Endothelial cell of umbilical vein (primary cell): ENCODE measurements at regions of chr21 and their contacts with region 1.

Region 1: DNA sequence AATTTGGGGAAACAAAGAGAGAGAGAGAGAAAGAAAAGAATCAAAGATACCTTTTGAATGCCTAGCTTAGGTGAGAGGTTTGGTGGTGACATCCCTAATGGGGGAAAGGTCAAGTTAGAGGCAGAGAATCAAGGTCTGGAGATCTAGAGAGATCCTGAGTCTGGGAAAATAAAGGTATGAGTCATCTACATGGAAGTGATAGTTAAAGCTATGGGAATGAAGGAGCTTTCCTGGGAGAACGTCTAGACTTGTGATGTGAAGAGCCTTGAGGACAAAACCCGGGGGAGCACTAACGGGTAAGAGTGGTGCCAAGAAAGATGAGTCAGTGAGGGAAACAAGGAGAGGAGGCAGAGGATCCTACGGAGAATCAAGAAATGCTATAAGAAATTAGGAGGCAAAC is 110.8 kb upstream of the RUNX1 start:
- DNase-seq: no peak
- H3K4me3 ChIP-seq: no peak overlapping the region
- H3K27ac ChIP-seq: no peak overlapping the region
- H3K4me1 ChIP-seq: no peaks in the 10 kb centered on the region
- H3K27me3 ChIP-seq: peaks cover 0 to 1% of the 10 kb centered on the region in 2 experiments
- CTCF ChIP-seq: no peak
- POLR2A ChIP-seq: no peak

Region 2: DNA sequence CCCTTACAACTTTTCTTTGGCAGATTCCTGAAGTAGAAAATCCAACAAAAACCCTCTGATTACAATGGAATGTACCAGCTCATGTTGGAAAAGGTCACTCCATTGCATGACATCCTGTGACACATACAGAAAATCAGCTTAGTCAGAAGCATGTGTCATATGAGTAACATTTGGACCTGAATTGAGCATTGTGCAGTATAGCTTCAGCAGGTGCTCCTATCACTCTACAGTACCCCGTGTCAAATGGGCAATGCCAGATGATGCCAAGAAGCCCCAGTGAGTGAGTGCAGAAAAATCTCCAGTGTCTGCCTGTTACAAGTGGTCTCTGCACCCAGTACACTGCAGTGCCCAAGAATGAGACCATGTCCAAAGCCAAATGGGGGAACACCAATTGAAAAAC is 18.9 kb after region 1 on chr21:
- CTCF ChIA-PET with region 1: no interaction called
- POLR2A ChIA-PET with region 1: no interaction called
- dilution Hi-C with region 1: no loop called
- intact Hi-C with region 1: no loop called
- DNase-seq: peak; percentile 10
- H3K4me3 ChIP-seq: no peak overlapping the region
- H3K27ac ChIP-seq: no peak overlapping the region
- H3K4me1 ChIP-seq: no peaks in the 10 kb centered on the region
- H3K27me3 ChIP-seq: peaks cover 0 to 2% of the 10 kb centered on the region in 2 experiments
- CTCF ChIP-seq: no peak
- POLR2A ChIP-seq: no peak

Region 3: GRCh38 chr21:35189077-35189863 is 29.4 kb after region 1 on chr21:
- CTCF ChIA-PET with region 1: no interaction called
- POLR2A ChIA-PET with region 1: no interaction called
- dilution Hi-C with region 1: no loop called
- intact Hi-C with region 1: loop called (anchors 1 kb)
- DNase-seq: no peak
- H3K4me3 ChIP-seq: no peak overlapping the region
- H3K27ac ChIP-seq: no peak overlapping the region
- H3K4me1 ChIP-seq: no peaks in the 10 kb centered on the region
- H3K27me3 ChIP-seq: no peaks in the 10 kb centered on the region
- CTCF ChIP-seq: no peak
- POLR2A ChIP-seq: no peak